ENCODE measurements at regions of chr12 and their contacts with region 1.

Region 1: DNA sequence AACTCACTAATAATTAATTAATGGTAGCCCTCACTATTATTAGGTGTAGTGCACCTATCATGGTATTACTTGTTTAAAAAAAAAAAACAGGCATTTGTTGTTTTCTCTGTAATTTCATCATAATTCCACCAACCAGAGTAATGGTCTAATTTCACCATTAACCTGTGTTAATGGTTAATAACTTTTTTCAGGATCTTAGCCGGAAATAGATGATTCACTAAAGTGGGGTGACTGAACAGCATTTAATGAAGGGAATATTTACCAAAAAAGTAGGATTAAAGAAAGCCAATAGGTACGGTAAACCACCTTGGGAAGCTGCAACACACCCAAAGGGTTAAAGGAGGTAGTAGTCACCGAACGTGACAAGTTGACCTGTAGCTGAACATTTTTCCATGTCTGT is 13.0 kb downstream of the ETFBKMT start:
- DNase-seq: no peak
- ATAC-seq: no peak
- H3K4me3 ChIP-seq: no peak overlapping the region
- H3K27ac ChIP-seq: no peak overlapping the region
- H3K4me1 ChIP-seq: no peaks in the 10 kb centered on the region
- H3K27me3 ChIP-seq: no peaks in the 10 kb centered on the region
- CTCF ChIP-seq: no peak

Region 2: GRCh38 chr12:31496257-31496656 is 176.3 kb before region 1 on chr12:
- CTCF ChIA-PET with region 1: no interaction called
- POLR2A ChIA-PET with region 1: no interaction called
- in situ Hi-C with region 1: no loop called
- intact Hi-C with region 1: no loop called
- DNase-seq: no peak
- ATAC-seq: no peak
- H3K4me3 ChIP-seq: no peak overlapping the region
- H3K27ac ChIP-seq: peak overlapping the region; percentile 20; the same call in 1 of the 2 replicates
- H3K4me1 ChIP-seq: peaks cover 45% of the 10 kb centered on the region
- H3K27me3 ChIP-seq: no peaks in the 10 kb centered on the region
- CTCF ChIP-seq: no peak

Region 3: GRCh38 chr12:31726575-31726974 is 54.1 kb after region 1 on chr12:
- CTCF ChIA-PET with region 1: no interaction called
- POLR2A ChIA-PET with region 1: interaction called, 15 read pairs
- in situ Hi-C with region 1: no loop called
- intact Hi-C with region 1: no loop called
- DNase-seq: no peak
- ATAC-seq: no peak
- H3K4me3 ChIP-seq: no peak overlapping the region
- H3K27ac ChIP-seq: peak overlapping the region; percentile 8
- H3K4me1 ChIP-seq: peaks cover 23% of the 10 kb centered on the region
- H3K27me3 ChIP-seq: no peaks in the 10 kb centered on the region
- CTCF ChIP-seq: no peak

Region 4: DNA sequence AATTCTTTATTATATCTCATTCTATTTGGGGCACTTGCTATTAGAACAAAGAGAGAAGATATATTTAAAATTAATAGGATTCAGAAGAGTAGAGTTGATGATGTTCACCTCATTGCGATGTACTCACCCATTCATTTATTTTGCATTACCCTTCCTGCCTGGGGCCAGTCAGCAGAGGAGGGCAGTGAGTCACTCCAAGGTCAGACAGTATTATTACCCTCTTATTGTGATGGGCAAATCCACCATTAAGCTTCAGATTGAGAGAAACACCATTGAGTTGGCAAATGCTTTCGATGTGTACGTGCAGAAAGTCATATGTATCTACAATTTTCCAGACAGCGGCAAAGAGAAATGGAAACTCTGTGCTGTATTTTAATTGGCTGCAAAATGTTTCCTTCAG is 568.3 kb after region 1 on chr12:
- CTCF ChIA-PET with region 1: no interaction called
- POLR2A ChIA-PET with region 1: interaction called, 13 read pairs
- in situ Hi-C with region 1: no loop called
- intact Hi-C with region 1: no loop called
- DNase-seq: no peak
- ATAC-seq: no peak
- H3K4me3 ChIP-seq: no peak overlapping the region
- H3K27ac ChIP-seq: no peak overlapping the region
- H3K4me1 ChIP-seq: no peaks in the 10 kb centered on the region
- H3K27me3 ChIP-seq: no peaks in the 10 kb centered on the region
- CTCF ChIP-seq: no peak

Measured in Panc1 (cell line).